ENCODE measurements at regions of chr7 and their contacts with region 1.

Region 1: GRCh38 chr7:132485600-132486273 is 90.5 kb downstream of the PLXNA4 start:
- DNase-seq: no peak
- H3K4me3 ChIP-seq: no peak overlapping the region
- H3K27ac ChIP-seq: peak overlapping the region; percentile 45
- H3K4me1 ChIP-seq: peaks cover 24% of the 10 kb centered on the region
- H3K27me3 ChIP-seq: no peaks in the 10 kb centered on the region
- CTCF ChIP-seq: no peak
- POLR2A ChIP-seq: no peak

Region 2: DNA sequence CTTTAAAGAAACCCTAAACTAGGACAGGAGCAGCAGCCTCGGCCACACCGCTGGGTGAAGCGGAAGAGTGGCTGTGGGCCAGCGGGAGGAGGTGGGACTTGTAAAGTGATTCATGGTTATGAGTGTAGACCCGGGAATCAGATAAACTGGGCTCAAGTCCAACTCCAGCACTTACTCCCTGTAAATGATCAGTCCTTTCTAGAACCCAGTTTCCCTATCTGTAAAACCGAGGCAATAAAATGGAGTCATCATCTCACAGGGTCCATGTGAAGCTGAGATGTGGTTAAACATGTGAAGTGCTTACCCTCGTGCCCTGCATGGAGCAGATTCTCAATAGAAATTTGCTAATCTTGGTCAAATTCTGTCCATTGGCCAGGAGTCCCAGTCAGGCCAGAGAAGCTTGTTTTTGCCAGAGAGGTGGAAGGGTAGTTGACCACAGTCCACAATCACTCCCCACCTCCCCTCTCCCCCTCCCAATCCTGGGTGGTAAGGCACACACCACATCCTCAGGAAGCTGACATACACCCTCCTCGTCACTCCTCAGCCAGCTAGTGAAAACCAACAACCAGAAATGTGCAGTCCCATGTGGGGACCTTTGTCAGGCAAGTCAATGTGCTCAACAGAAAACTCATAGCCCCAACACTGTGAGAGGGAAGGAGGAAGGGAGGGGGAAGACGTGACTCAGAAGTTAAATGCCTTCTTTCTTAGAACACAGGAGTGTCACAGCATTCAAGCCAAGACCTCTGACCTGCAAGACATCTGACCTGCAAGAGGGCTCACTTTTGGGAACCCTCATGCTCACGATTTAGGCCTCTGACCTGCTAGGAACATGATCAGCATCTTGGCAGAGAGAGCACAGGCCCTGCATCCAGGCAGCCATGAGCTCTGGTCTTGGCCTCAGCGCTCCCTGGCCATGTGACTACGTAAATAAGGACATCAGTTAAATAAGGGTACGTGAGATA is 54.6 kb before region 1 on chr7:
- CTCF ChIA-PET with region 1: interaction called, 4 read pairs
- POLR2A ChIA-PET with region 1: no interaction called
- dilution Hi-C with region 1: no loop called
- intact Hi-C with region 1: loop called (anchors 1 kb)
- DNase-seq: peak; percentile 92
- H3K4me3 ChIP-seq: no peak overlapping the region
- H3K27ac ChIP-seq: peak overlapping the region; percentile 87
- H3K4me1 ChIP-seq: peaks cover 44% of the 10 kb centered on the region
- H3K27me3 ChIP-seq: no peaks in the 10 kb centered on the region
- CTCF ChIP-seq: no peak
- POLR2A ChIP-seq: peak; percentile 26

Region 3: GRCh38 chr7:132475669-132476116 is 10.0 kb before region 1 on chr7:
- CTCF ChIA-PET with region 1: interaction called, 22 read pairs
- POLR2A ChIA-PET with region 1: no interaction called
- dilution Hi-C with region 1: no loop called
- intact Hi-C with region 1: no loop called
- DNase-seq: no peak
- H3K4me3 ChIP-seq: no peak overlapping the region
- H3K27ac ChIP-seq: no peak overlapping the region
- H3K4me1 ChIP-seq: peaks cover 16% of the 10 kb centered on the region
- H3K27me3 ChIP-seq: no peaks in the 10 kb centered on the region
- CTCF ChIP-seq: no peak
- POLR2A ChIP-seq: no peak